Activated CD4-positive, alpha-beta memory T cell treated with anti-CD3 and anti-CD28 coated beads for 36 hours (primary cell): ENCODE measurements at regions of chr13 and their contacts with region 1.

Region 1: GRCh38 chr13:110819203-110820014 is 95.5 kb downstream of the ANKRD10 start:
- DNase-seq: peak; percentile 87
- H3K4me3 Mint-ChIP-seq: no peak overlapping the region
- H3K27ac Mint-ChIP-seq: no peak overlapping the region
- H3K4me1 Mint-ChIP-seq: peaks cover 5% of the 10 kb centered on the region
- H3K27me3 Mint-ChIP-seq: peaks cover 1% of the 10 kb centered on the region

Region 2: DNA sequence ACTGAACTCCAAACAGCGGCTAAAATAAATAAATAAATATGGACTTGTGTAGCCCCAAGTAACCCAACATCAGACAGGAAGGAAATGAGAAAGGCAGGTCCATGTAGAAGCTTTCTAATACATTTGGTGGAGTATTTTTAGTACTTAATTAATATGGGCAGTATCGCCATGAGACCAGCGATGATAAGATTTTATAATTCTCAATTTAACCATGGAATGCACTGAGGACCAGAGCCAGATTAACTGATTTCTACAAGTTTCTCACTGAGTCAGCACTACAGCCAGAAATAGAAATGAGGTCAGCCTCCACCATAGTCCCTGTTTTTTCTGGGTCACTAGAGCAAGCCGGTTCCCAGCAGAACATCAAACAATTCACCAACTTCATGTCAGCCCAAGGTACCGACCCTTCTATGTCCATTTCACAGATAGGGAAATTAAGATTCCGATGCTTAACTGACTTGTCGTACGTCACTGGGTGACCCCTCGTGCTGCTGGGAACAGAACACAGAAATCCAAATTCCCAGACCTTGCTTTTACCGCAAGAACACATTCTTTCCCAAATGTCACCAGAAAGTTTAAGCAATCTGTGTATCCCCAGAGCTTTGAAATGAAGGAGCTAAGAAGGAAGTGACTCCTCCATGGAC is 602.9 kb before region 1 on chr13:
- CTCF ChIA-PET with region 1: no interaction called
- POLR2A ChIA-PET with region 1: no interaction called
- intact Hi-C with region 1: loop called (anchors 5 kb)
- DNase-seq: no peak
- H3K4me3 Mint-ChIP-seq: no peak overlapping the region
- H3K27ac Mint-ChIP-seq: no peak overlapping the region
- H3K4me1 Mint-ChIP-seq: no peaks in the 10 kb centered on the region
- H3K27me3 Mint-ChIP-seq: peaks cover 11% of the 10 kb centered on the region

Region 3: GRCh38 chr13:110455941-110456340 is 363.5 kb before region 1 on chr13:
- CTCF ChIA-PET with region 1: interaction called, 19 read pairs
- POLR2A ChIA-PET with region 1: no interaction called
- intact Hi-C with region 1: loop called (anchors 2 kb)
- DNase-seq: peak; percentile 78
- H3K4me3 Mint-ChIP-seq: no peak overlapping the region
- H3K27ac Mint-ChIP-seq: no peak overlapping the region
- H3K4me1 Mint-ChIP-seq: peaks cover 4% of the 10 kb centered on the region
- H3K27me3 Mint-ChIP-seq: peaks cover 20% of the 10 kb centered on the region

Region 4: GRCh38 chr13:110593430-110594130 is 225.8 kb before region 1 on chr13:
- CTCF ChIA-PET with region 1: interaction called, 18 read pairs
- POLR2A ChIA-PET with region 1: no interaction called
- intact Hi-C with region 1: loop called (anchors 1 kb)
- DNase-seq: no peak
- H3K4me3 Mint-ChIP-seq: no peak overlapping the region
- H3K27ac Mint-ChIP-seq: no peak overlapping the region
- H3K4me1 Mint-ChIP-seq: peaks cover 1% of the 10 kb centered on the region
- H3K27me3 Mint-ChIP-seq: peaks cover 3% of the 10 kb centered on the region

Region 5: GRCh38 chr13:110644892-110645521 is 174.4 kb before region 1 on chr13:
- CTCF ChIA-PET with region 1: interaction called, 13 read pairs
- POLR2A ChIA-PET with region 1: no interaction called
- intact Hi-C with region 1: no loop called
- DNase-seq: peak; percentile 61
- H3K4me3 Mint-ChIP-seq: no peak overlapping the region
- H3K27ac Mint-ChIP-seq: no peak overlapping the region
- H3K4me1 Mint-ChIP-seq: no peaks in the 10 kb centered on the region
- H3K27me3 Mint-ChIP-seq: no peaks in the 10 kb centered on the region

Region 6: DNA sequence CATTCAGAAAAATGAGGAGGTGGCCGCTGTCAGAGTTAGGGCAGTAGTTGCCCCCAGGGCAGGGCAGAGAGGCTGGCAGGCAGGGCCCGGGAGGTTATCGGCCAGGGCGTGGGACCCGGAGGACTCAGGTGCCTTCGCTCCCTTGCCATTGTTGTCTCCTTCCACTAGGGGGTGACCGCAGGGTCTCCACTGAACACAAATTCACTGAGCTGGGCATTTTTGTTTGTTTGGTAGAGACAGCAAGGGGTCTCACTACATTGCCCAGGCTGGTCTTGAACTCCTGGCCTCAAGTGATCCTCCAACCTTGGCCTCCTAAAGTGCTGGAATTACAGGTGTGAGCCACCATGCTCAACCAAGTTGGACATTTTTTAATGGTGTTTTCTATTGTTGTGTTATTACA is 138.6 kb before region 1 on chr13:
- CTCF ChIA-PET with region 1: interaction called, 39 read pairs
- POLR2A ChIA-PET with region 1: no interaction called
- intact Hi-C with region 1: loop called (anchors 1 kb)
- DNase-seq: no peak
- H3K4me3 Mint-ChIP-seq: no peak overlapping the region
- H3K27ac Mint-ChIP-seq: no peak overlapping the region
- H3K4me1 Mint-ChIP-seq: peaks cover 17% of the 10 kb centered on the region
- H3K27me3 Mint-ChIP-seq: no peaks in the 10 kb centered on the region

Region 7: DNA sequence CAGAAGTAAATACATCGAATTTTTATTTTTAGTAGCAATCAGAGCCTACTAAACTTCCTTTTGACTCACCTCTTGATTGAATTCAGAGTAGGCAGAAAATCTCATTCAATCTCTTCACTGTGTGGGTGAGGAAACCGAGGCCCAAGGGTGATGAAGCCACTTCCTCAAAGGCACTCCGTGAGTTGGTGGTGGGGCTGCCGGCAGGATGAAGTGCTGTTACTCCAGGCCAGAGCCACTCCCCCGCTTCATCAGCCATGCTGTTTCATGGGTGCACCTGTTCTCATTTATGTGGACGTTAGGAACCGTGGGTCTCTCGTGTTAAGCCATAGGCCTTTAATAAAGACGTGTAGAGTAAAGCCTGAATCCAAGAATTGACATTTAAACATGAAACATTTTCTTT is 92.7 kb before region 1 on chr13:
- CTCF ChIA-PET with region 1: no interaction called
- POLR2A ChIA-PET with region 1: interaction called, 3 read pairs
- intact Hi-C with region 1: loop called (anchors 5 kb)
- DNase-seq: peak; percentile 86
- H3K4me3 Mint-ChIP-seq: peak overlapping the region; percentile 24
- H3K27ac Mint-ChIP-seq: peak overlapping the region; percentile 71
- H3K4me1 Mint-ChIP-seq: peaks cover 19% of the 10 kb centered on the region
- H3K27me3 Mint-ChIP-seq: no peaks in the 10 kb centered on the region